Dendritic cell treated with granulocyte-macrophage colony-stimulating factor and Interleukin-4, amounts not matched to agents 40 ng/mL and 50 ng/mL, for 4 days (primary cell): ENCODE measurements at regions of chr4 and their contacts with region 1.

Region 1: GRCh38 chr4:14871676-14872430 is 130.4 kb upstream of the CPEB2 start:
- H3K4me3 Mint-ChIP-seq: no peak overlapping the region
- H3K27ac Mint-ChIP-seq: no peak overlapping the region
- H3K4me1 Mint-ChIP-seq: peaks cover 14% of the 10 kb centered on the region
- H3K27me3 Mint-ChIP-seq: peaks cover 8% of the 10 kb centered on the region

Region 2: GRCh38 chr4:14719053-14719452 is 152.8 kb before region 1 on chr4:
- intact Hi-C with region 1: no loop called
- H3K4me3 Mint-ChIP-seq: no peak overlapping the region
- H3K27ac Mint-ChIP-seq: no peak overlapping the region
- H3K4me1 Mint-ChIP-seq: no peaks in the 10 kb centered on the region
- H3K27me3 Mint-ChIP-seq: no peaks in the 10 kb centered on the region

Region 3: DNA sequence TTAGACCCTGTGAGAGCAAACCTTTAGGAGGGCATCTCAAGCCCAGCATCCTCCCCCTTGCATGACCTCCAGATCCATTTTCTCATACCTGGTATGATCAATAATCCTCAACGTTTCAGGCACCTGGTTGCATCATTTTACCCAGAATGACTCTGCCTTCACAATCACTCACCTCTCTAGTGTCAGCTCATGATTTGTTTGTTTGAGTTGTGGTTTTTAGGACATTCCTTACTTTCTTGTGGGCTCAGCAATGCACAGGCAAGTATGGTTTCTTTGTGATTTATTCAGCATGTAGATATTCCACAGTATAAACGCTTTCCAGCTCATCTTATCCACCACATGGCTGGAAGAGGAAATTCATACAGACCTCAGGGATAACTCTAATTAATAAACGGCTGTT is 36.8 kb after region 1 on chr4:
- intact Hi-C with region 1: loop called (anchors 5 kb)
- H3K4me3 Mint-ChIP-seq: no peak overlapping the region
- H3K27ac Mint-ChIP-seq: no peak overlapping the region
- H3K4me1 Mint-ChIP-seq: peaks cover 27% of the 10 kb centered on the region
- H3K27me3 Mint-ChIP-seq: peaks cover 32% of the 10 kb centered on the region